Posterior vena cava (tissue), 2 donors: ENCODE measurements at regions of chr16 and their contacts with region 1.

Region 1: GRCh38 chr16:16100631-16101030 is 122.7 kb downstream of the ABCC6 start:
- DNase-seq: no peak

Region 2: DNA sequence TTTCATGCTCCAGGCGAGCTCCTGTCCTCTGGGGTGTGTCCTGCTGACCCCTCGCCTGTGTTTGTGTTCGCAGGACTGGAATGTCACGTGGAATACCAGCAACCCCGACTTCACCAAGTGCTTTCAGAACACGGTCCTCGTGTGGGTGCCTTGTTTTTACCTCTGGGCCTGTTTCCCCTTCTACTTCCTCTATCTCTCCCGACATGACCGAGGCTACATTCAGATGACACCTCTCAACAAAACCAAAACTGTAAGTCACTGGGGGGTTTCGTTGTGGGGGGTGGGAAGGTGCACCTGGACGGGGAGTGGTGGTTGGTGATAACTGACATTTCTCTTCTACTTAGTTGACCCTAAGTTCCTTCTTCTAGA is 92.9 kb before region 1 on chr16:
- intact Hi-C with region 1: no loop called
- DNase-seq: no peak

Region 3: DNA sequence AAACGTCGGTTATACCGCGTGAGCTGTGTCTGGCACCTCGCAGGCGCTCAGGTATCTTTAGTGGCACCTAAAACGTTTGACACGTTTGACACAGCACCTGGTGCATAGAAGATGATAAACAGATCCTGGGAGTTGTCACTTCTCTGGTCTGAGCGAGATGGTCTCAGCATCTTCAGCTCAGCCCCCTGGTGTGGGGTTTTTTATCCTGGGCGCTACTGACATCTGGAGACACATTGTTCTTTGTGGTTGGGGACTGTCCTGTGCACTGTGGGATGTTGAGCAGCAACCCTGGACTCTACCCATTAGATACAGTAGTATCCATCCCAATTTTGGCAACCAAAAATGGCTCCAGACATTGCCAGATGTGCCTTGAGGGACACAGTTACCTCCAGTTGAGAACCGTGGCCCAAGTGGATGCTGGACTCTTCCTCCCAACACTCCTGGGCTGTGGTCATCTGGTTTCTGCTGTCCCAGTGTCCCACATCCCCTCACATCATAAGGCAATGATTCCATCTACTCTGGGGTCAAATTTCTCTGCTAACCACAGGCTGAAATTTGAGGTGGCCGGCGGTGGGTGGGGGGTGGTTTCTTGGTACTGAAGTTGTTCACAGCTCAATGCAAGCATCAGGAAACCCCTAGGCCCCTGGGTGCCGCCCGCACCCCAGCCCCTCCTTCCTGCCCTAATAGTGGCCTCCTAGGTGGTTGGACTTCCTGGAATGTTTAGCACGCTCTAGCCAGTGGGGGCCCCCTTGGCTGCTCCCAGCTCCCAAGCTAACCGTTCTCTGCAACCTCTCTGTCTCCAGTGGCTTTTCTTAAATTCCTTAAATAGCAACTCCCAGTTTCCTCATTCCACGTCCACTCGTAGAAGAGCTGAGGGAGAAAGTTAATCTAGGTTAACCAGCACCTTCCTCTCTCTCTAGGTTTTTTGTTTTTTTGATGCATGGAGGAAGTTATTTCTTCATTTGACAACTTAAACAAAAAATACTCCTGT is 26.4 kb before region 1 on chr16:
- intact Hi-C with region 1: no loop called
- DNase-seq: no peak

Region 4: GRCh38 chr16:16120382-16121184 is 20.0 kb after region 1 on chr16:
- intact Hi-C with region 1: loop called in 1 of 2 experiments (anchors 2 kb)
- DNase-seq: peak; percentile 86

Region 5: GRCh38 chr16:16137056-16137455 is 36.4 kb after region 1 on chr16:
- intact Hi-C with region 1: loop called in 1 of 2 experiments (anchors 1 kb)
- DNase-seq: no peak